Activated T-helper 1 cell treated with anti-CD3 and anti-CD28 coated beads, Interleukin-12 subunit alpha, Interleukin-12 subunit beta, Interleukin-2, Interleukin-4 antibody, amounts not matched to agents 30 ng/mL and 10 ng/mL and 1 ng/mL, durations not matched to agents 14 hours and 24 hours and 36 hours (primary cell): ENCODE measurements at regions of chr11 and their contacts with region 1.

Region 1: DNA sequence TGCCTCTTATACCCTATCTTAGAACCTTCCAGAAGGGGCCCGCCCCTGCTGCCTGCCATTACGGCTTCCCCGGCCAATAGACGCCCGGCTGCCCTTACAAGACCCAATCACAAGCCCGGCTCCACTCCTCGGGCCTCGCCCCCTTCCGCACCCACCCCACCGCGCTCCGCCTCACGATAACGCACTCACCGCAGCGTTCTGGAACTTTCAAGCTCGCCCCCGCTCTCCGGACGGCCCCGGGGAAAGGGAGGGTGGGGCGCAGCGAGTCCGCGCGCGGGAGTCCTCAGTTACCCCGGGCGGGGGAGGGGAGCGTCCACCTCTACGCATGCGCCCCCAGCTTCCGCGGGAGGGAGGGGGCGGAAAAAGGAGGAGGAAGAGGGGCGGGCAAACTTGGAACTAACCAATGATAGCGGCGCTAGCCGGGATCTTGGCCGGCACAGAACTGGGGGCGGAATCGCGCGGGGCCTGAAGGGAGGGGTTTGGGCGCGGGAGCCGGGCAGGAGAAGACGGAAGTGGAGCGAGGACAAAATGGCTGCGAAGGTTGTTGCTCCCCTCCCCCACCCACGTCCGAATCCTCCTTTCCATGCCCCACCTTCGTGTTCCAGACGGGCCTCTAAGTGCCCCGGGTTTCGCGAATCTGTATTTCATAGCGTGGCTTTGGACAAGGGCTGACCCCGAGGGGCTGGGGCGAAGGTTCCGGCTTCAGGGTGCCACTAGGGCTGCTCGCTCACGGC is 389 bp upstream of the HSPA8 start:
- DNase-seq: peak; percentile 99
- H3K4me3 Mint-ChIP-seq: peak overlapping the region; percentile 98
- H3K27ac Mint-ChIP-seq: peak overlapping the region; percentile 100
- H3K4me1 Mint-ChIP-seq: peaks cover 43% of the 10 kb centered on the region
- H3K27me3 Mint-ChIP-seq: peaks cover 2% of the 10 kb centered on the region

Region 2: GRCh38 chr11:121464352-121464946 is 1597.9 kb before region 1 on chr11:
- intact Hi-C with region 1: loop called (anchors 10 kb)
- DNase-seq: peak; percentile 66
- H3K4me3 Mint-ChIP-seq: peak overlapping the region; percentile 76
- H3K27ac Mint-ChIP-seq: peak overlapping the region; percentile 94
- H3K4me1 Mint-ChIP-seq: peaks cover 94% of the 10 kb centered on the region
- H3K27me3 Mint-ChIP-seq: peaks cover 2% of the 10 kb centered on the region

Region 3: DNA sequence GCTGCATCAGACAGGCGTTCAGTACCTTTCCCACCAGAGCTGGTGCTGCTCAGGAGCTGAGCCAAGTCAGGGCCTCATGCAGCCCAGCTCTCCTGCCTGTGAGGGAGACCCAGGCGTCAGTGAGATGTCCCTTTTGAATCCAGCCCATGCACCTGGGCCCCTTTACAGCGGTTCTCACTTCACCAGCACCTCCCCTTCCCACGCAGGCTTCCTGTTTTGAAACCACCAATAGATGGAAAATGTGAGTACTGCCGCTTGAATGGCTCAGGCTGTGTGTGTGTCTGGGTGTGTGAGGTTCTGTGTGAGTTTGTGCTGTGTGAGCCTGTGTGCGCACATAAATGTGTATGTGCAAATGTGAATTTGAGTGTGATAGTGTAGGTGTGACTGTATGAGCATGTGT is 318.4 kb before region 1 on chr11:
- intact Hi-C with region 1: loop called (anchors 1 kb)
- DNase-seq: peak; percentile 75
- H3K4me3 Mint-ChIP-seq: no peak overlapping the region
- H3K27ac Mint-ChIP-seq: no peak overlapping the region
- H3K4me1 Mint-ChIP-seq: no peaks in the 10 kb centered on the region
- H3K27me3 Mint-ChIP-seq: peaks cover 18% of the 10 kb centered on the region

Region 4: DNA sequence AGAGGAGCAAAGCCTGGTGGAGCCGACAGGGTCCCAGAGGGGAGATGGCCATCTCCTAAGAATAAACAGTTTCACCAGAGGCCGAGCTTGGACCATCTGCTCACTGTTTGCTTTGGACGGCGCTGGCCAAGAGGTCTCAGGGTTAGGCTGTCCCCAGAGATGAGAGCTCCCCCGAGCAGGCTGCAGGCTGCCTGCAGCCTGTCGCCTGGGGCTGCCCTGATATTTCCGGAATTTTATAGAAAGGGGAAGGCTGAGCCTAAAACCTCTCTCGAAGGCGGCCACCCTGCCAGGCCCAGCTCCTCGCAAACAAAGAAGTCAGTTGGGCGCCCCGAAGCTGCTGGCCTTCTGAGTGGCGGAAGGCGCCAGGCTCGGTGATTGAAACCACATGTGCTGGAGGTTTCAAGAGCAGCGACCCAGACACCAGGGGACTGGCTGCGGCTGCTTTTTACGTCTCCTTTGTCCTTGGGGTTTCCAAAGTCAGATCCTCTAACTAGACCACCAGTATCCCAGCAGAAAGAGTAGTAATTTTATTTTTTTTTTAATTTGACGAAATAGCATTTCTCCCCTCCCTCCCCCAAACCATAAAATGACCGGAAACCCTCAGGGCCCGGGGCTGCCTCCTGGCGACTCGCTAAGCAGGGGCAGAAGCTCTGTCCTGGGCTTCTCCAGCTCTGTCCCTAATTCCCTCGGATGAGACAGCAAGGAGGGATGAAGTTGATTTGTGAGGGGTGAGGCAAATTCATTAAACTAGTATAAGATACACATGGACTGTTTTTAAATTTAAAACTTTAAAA is 75.3 kb after region 1 on chr11:
- intact Hi-C with region 1: no loop called
- DNase-seq: no peak
- H3K4me3 Mint-ChIP-seq: no peak overlapping the region
- H3K27ac Mint-ChIP-seq: no peak overlapping the region
- H3K4me1 Mint-ChIP-seq: no peaks in the 10 kb centered on the region
- H3K27me3 Mint-ChIP-seq: peaks cover 4% of the 10 kb centered on the region

Region 5: GRCh38 chr11:123357961-123358841 is 295.9 kb after region 1 on chr11:
- intact Hi-C with region 1: loop called (anchors 5 kb)
- DNase-seq: peak; percentile 53
- H3K4me3 Mint-ChIP-seq: peak overlapping the region; percentile 99
- H3K27ac Mint-ChIP-seq: peak overlapping the region; percentile 97
- H3K4me1 Mint-ChIP-seq: peaks cover 77% of the 10 kb centered on the region
- H3K27me3 Mint-ChIP-seq: no peaks in the 10 kb centered on the region

Region 6: DNA sequence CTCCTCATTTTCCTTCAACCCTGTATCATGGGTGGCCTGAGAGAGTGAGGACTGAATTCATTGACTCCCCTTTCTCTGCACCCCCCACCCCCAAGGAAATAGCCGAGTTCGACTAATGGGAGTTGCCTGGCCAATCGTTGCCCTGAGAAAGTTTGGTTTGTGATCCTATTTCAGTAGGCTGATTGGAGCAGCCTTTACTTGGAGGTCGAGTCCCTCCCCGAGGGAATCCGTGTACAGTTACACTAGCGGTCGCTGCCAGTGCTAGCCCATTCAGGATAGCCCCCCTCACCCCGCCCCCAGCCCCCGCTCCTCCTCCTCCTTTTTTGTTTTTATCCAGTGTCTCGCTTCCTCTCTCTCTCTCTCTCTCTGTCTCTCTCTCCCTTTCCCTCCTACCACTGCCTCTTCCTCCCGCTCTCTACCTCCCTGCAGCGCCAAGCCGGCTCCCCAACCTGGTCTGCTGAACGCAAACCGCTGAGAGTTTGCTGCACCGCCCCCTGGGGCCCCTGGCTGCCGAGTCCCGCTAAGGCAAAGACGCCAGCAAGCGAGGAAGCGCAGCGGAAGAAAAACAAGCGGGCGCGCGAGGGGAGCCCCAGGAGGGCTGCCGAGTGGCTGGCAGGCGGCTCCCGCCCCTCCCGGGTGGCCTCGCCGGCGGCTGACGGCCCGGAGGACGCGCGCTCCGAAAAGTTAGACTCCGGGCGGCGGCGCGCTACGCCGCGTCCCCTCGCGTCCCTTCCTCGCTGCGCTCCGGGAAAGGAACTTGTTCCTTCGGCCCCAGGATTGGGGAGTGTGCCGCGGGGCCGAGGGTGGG is 367.8 kb after region 1 on chr11 and contains the start of gene GRAMD1B:
- intact Hi-C with region 1: loop called (anchors 5 kb)
- DNase-seq: peak; percentile 78
- H3K4me3 Mint-ChIP-seq: peak within 1 kb of the TSS; percentile 91
- H3K27ac Mint-ChIP-seq: peak within 1 kb of the TSS; percentile 93
- H3K4me1 Mint-ChIP-seq: peaks cover 76% of the 10 kb centered on the region
- H3K27me3 Mint-ChIP-seq: no peaks in the 10 kb centered on the region
- total RNA-seq, gene GRAMD1B: 154 and 155 TPM in 2 replicates

Region 7: GRCh38 chr11:123741159-123742028 is 679.1 kb after region 1 on chr11 and contains the start of gene ZNF202:
- intact Hi-C with region 1: loop called (anchors 10 kb)
- DNase-seq: peak; percentile 87
- H3K4me3 Mint-ChIP-seq: peak within 1 kb of the TSS; percentile 96
- H3K27ac Mint-ChIP-seq: peak within 1 kb of the TSS; percentile 93
- H3K4me1 Mint-ChIP-seq: peaks cover 37% of the 10 kb centered on the region
- H3K27me3 Mint-ChIP-seq: peaks cover 7% of the 10 kb centered on the region
- total RNA-seq, gene ZNF202: 26.6 and 27.5 TPM in 2 replicates